ENCODE measurements at regions of chr2 and their contacts with region 1.

Region 1: DNA sequence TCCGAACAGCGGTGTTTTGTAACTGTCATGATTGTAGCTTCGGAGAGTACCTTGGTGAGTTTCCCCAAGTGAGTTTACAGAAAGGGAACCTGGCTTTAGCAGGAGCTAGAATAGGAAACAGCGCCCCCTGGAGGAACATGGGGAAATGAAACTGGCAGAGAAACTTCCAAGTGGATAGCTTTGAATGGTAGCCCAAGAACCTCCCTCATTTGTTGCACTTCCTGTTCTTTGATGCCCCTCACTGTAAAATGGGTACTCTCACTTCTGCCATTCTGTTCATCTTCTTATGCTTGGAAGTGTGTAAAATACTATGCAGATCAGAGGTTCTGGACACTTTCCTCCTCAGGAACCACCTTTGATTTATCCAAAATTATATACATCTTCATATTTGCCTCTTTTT is 36.2 kb downstream of the CHST10 start:
- DNase-seq: peak; percentile 63
- CTCF ChIP-seq: peak; percentile 83

Region 2: DNA sequence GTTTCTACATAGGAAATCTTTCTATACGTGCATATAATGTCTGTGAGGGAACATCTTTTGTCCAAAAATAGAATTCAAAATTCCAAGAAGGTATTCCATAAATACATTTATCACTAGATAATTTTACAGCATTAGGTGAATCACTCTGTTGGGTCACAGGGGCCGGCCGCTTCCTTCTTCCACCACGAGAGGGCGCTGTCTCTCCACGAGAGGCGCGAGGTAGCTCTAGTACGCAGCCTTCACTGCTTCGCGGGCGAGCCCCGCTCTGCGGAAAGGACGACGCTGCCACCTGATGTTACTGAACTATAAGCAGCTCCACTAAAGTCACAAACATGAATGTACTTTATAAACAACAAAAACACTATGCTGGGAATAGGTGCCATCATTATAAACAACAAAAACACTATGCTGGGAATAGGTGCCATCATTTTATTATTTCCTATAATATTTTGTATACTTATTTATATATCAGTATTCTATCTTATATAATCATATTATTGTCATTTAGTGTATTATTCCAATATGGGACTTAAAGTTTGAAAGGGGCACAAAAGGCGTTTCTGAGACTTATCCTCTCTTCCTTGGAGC is 822.1 kb before region 1 on chr2:
- in situ Hi-C with region 1: loop called (anchors 25 kb)
- DNase-seq: peak; percentile 82
- CTCF ChIP-seq: peak; percentile 96

Region 3: DNA sequence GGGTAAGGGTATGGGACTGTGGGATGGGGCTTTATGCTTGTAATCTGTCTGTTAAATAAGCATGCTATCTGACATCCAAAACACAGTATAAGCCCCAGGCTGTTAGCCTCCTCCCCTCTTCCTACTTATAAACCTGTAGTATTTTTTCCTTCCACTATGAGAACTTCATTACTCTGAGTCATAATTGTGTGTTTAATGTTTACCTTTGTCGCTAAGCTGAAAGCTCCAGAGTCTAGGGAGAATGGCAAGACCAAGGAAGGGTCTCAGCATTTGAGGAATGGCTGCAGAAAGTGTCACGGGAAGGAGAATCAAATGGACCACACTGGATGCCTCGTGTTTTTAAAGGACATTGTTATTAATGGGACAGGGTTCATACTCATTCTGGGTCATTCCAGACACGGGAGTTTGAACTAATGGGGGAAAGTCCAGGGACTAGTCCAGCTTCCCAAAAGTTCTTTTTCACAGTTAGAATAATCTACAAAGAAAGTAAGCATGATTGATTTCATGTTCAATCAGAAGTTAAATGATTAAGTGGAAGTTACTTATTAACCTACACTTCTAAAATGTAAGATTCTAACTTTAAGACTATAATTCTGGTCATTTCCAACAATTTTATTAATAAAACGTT is 531.0 kb before region 1 on chr2:
- in situ Hi-C with region 1: no loop called
- DNase-seq: no peak
- CTCF ChIP-seq: no peak

Region 4: DNA sequence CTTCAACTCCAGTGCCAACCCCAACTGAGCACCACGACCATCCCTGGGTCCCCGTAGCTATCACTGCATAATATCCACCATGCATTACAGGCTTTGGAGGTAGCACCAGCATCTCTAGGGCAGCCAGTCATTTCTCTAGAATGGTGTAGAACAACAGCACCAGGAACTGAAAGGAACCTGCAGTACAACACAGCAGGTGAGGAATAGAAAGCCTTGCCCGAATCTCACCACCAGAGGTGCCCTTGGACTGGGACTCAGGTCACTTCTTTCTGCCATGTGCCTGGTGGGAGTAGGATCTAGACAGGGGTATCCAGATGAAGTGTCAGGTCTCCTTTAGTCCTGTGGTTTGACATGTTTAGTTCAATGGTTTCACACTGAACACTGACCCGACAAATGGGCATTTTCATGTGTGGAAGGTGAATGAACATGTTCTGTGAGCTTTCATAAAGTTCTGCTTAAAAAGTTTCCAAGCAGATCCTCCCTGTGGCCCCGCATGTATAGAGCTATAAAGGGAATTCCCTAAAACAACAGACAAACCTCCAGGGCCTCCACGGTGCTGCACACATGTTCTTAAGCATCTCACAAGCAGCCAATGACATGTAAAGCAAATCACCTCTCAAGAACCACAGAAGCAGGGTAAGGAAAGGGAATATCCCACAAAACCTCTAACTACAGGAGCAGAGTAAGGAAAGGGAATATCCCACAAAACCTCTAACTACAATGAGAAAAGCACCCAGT is 447.2 kb before region 1 on chr2:
- in situ Hi-C with region 1: no loop called
- DNase-seq: no peak
- CTCF ChIP-seq: no peak

Region 5: GRCh38 chr2:100630473-100630977 is 249.3 kb after region 1 on chr2:
- in situ Hi-C with region 1: no loop called
- DNase-seq: no peak
- CTCF ChIP-seq: no peak